ENCODE measurements at regions of chr2 and their contacts with region 1.

Region 1: GRCh38 chr2:25376750-25377621 is 35.3 kb upstream of the DNMT3A start:
- DNase-seq: peak; percentile 94
- ATAC-seq: peak; percentile 99
- H3K4me3 ChIP-seq: peak overlapping the region in 3 of 5 experiments; percentile 6 to 37 (median 29)
- H3K4me3 Mint-ChIP-seq: peak overlapping the region; percentile 78
- H3K27ac ChIP-seq: peak overlapping the region; percentile 80 to 87
- H3K27ac Mint-ChIP-seq: peak overlapping the region; percentile 92
- H3K4me1 ChIP-seq: peaks cover 31 to 41% of the 10 kb centered on the region in 2 donors
- H3K4me1 Mint-ChIP-seq: peaks cover 34% of the 10 kb centered on the region
- H3K27me3 ChIP-seq: no peaks in the 10 kb centered on the region
- H3K27me3 Mint-ChIP-seq: no peaks in the 10 kb centered on the region
- CTCF ChIP-seq: peak; percentile 97

Region 2: DNA sequence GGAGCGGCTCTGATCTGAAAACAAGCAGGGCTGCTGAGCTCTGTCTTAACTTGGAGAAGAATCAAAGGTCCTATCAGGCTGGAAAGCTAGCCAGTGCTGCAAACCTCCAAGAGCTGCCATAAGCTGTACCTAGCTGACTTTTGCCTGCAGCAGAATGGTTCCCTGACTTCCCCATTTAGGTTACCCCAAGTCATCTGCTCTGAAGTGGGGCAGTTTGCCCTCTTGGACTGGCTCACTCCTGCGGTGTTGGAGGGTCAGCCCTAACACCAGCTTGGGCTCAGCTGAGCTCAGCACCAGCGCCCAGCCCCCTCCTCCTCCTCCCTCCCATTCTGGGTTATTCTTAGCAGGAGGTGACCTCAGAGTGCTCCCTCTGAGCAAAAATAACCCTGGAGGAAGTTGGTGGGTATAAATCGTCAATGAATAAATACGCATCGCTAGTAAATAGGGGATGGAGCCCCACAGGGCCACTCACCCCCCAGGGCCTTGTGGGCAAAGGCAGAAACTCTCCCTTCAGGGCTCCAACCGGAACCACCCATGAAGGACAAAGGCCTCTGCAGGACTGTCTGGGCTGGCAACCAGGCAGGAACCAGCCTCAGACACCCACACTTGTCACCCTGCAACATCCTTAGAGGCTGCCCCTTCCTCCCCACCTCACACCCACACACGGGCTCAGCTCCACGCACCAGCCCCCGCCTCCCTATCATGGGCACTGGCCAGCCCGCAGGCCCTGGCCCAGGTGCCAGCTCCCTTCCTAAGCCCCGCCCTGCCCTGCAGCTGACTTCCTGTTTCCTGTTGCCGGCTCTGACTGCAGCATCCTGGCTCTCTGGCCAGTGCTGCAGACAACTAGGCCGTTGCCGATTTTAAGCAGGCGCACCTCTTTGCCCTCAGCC is 82.2 kb before region 1 on chr2:
- CTCF ChIA-PET with region 1: no interaction called
- POLR2A ChIA-PET with region 1: no interaction called
- intact Hi-C with region 1: loop called (anchors 1 kb)
- DNase-seq: peak; percentile 81
- ATAC-seq: peak; percentile 81
- H3K4me3 ChIP-seq: peak overlapping the region in 4 of 5 experiments; percentile 6 to 45 (median 26)
- H3K4me3 Mint-ChIP-seq: peak overlapping the region; percentile 80
- H3K27ac ChIP-seq: peak overlapping the region; percentile 87 to 91
- H3K27ac Mint-ChIP-seq: peak overlapping the region; percentile 94
- H3K4me1 ChIP-seq: peaks cover 41 to 61% of the 10 kb centered on the region in 2 donors
- H3K4me1 Mint-ChIP-seq: peaks cover 43% of the 10 kb centered on the region
- H3K27me3 ChIP-seq: no peaks in the 10 kb centered on the region
- H3K27me3 Mint-ChIP-seq: no peaks in the 10 kb centered on the region
- CTCF ChIP-seq: no peak

Region 3: DNA sequence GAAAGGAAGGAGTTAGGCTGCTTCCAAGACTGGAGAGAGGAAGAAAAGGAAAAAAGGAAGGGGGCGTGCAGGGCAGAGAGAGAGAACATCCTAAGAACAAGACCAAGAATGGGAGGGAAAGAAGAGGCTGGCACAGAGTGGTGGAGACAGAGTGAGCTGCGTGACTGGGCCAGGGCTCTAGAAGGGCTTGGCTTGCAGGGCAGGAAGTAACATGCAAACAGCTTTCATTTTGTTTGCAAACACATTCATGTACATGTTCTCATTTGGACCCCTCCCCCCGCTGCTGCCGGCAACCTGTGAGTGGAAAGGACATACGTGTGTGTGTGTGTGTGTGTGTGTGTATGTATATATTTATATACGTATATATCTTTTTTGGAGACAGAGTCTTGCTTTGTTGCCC is 11.5 kb after region 1 on chr2:
- CTCF ChIA-PET with region 1: interaction called, 30 read pairs
- POLR2A ChIA-PET with region 1: interaction called, 8 read pairs
- intact Hi-C with region 1: no loop called
- DNase-seq: no peak
- ATAC-seq: peak; percentile 75
- H3K4me3 ChIP-seq: peak overlapping the region in 2 of 5 experiments; percentile 16 to 39
- H3K4me3 Mint-ChIP-seq: peak overlapping the region; percentile 57
- H3K27ac ChIP-seq: peak overlapping the region in 1 of 2 donors; percentile 1
- H3K27ac Mint-ChIP-seq: peak overlapping the region; percentile 85
- H3K4me1 ChIP-seq: peaks cover 4 to 23% of the 10 kb centered on the region in 2 donors
- H3K4me1 Mint-ChIP-seq: peaks cover 29% of the 10 kb centered on the region
- H3K27me3 ChIP-seq: no peaks in the 10 kb centered on the region
- H3K27me3 Mint-ChIP-seq: no peaks in the 10 kb centered on the region
- CTCF ChIP-seq: no peak

Region 4: GRCh38 chr2:25411281-25411680 is 34.3 kb after region 1 on chr2:
- CTCF ChIA-PET with region 1: interaction called, 7 read pairs
- POLR2A ChIA-PET with region 1: interaction called, 7 read pairs
- intact Hi-C with region 1: loop called (anchors 2 kb)
- DNase-seq: peak; percentile 68
- ATAC-seq: peak; percentile 68
- H3K4me3 ChIP-seq: peak overlapping the region in 1 of 5 experiments; percentile 37
- H3K4me3 Mint-ChIP-seq: peak overlapping the region; percentile 62
- H3K27ac ChIP-seq: peak overlapping the region; percentile 58 to 68
- H3K27ac Mint-ChIP-seq: peak overlapping the region; percentile 86
- H3K4me1 ChIP-seq: peaks cover 46 to 61% of the 10 kb centered on the region in 2 donors
- H3K4me1 Mint-ChIP-seq: peaks cover 58% of the 10 kb centered on the region
- H3K27me3 ChIP-seq: no peaks in the 10 kb centered on the region
- H3K27me3 Mint-ChIP-seq: no peaks in the 10 kb centered on the region
- CTCF ChIP-seq: no peak

Region 5: DNA sequence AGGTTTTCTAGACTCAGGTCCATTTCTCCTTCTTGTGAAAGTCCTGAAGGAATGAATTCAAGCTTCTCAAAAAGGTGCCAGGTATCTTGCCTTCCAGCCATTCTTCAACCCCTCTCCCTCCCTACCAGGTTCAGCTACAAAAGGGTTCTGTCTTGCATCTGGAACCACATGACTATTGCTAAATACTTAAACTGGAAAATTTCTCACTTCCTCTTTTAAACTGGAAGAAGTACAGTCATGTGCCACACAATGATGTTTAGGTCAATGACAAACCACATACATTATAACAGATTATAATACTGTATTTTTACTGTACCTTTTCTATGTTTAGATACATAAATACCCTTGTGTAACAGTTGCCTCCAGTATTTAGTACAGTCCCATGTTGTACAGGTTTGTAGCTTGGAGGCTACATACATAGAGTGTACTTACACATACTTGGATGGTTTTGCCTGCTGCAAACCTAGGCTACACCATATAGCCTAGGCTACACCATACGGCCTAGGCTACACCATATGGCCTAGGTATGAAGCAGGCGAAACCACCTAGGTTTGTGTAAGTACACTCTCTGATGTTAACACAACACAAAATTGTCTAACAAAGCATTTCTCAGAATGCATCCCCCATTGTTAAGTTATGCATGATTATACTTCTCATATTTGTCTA is 106.7 kb after region 1 on chr2:
- CTCF ChIA-PET with region 1: interaction called, 7 read pairs
- POLR2A ChIA-PET with region 1: no interaction called
- intact Hi-C with region 1: loop called (anchors 1 kb)
- DNase-seq: peak; percentile 70
- ATAC-seq: peak; percentile 83
- H3K4me3 ChIP-seq: no peak overlapping the region
- H3K4me3 Mint-ChIP-seq: peak overlapping the region; percentile 37
- H3K27ac ChIP-seq: peak overlapping the region; percentile 28 to 37
- H3K27ac Mint-ChIP-seq: peak overlapping the region; percentile 80
- H3K4me1 ChIP-seq: peaks cover 20 to 24% of the 10 kb centered on the region in 2 donors
- H3K4me1 Mint-ChIP-seq: peaks cover 34% of the 10 kb centered on the region
- H3K27me3 ChIP-seq: no peaks in the 10 kb centered on the region
- H3K27me3 Mint-ChIP-seq: no peaks in the 10 kb centered on the region
- CTCF ChIP-seq: no peak

Region 6: DNA sequence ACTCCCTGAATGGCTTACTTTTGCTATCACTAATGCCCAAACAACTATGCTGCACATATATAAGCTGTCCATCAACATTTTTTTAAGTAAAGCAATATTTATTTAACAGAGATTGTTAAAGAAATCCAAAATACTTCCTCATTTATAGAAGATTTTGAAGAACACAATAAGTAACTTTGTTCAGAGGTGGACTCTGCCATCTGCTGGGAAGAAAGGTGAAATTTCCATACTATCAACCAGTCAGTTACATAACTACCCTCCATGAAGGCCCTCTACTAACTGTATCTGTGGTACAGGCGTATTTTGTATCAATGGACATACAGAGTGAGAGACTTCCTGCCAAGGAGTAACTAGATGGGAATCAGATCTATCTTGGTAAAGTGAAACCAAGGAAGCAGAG is 190.4 kb after region 1 on chr2:
- CTCF ChIA-PET with region 1: no interaction called
- POLR2A ChIA-PET with region 1: no interaction called
- intact Hi-C with region 1: loop called (anchors 1 kb)
- DNase-seq: peak; percentile 71
- ATAC-seq: peak; percentile 69
- H3K4me3 ChIP-seq: no peak overlapping the region
- H3K4me3 Mint-ChIP-seq: no peak overlapping the region
- H3K27ac ChIP-seq: peak overlapping the region in 1 of 2 donors; percentile 2
- H3K27ac Mint-ChIP-seq: no peak overlapping the region
- H3K4me1 ChIP-seq: peaks cover 17 to 19% of the 10 kb centered on the region in 2 donors
- H3K4me1 Mint-ChIP-seq: peaks cover 28% of the 10 kb centered on the region
- H3K27me3 ChIP-seq: no peaks in the 10 kb centered on the region
- H3K27me3 Mint-ChIP-seq: no peaks in the 10 kb centered on the region
- CTCF ChIP-seq: peak; percentile 77

Region 7: DNA sequence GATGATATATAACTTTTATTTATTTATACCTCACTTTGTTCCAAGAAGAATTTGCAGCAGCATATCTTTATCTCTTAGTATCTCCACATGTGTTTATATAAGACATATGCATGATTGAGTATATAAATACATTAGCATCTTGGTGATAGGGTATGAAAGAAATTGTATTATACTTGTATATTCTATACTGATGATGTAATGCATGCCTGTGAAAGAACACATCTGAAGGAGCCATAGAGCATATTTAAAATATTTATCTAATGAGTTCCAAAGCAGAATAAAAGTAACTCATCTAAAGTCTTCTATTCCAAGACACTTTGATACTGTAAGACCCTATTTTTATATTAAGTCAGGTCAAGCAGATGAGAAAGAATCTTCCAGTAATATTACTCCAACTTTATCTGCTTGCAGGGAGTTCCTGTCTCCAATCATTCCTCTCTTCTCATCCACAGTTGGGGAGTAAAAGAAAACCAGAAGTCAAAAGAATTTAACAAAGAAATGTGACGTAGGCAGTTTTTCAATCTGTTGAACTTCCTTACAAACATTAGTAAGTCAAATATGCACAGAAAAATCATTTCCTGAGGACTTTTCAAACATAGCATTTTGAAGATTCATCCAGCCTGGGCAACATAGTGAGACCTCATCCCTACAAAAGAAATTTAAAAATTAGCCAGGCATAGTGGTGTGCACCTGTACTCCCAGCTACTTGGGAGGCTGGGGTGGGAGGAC is 219.7 kb after region 1 on chr2:
- CTCF ChIA-PET with region 1: no interaction called
- POLR2A ChIA-PET with region 1: no interaction called
- intact Hi-C with region 1: no loop called
- DNase-seq: no peak
- ATAC-seq: no peak
- H3K4me3 ChIP-seq: no peak overlapping the region
- H3K4me3 Mint-ChIP-seq: no peak overlapping the region
- H3K27ac ChIP-seq: no peak overlapping the region
- H3K27ac Mint-ChIP-seq: no peak overlapping the region
- H3K4me1 ChIP-seq: peaks cover 0 to 8% of the 10 kb centered on the region in 2 donors
- H3K4me1 Mint-ChIP-seq: peaks cover 11% of the 10 kb centered on the region
- H3K27me3 ChIP-seq: no peaks in the 10 kb centered on the region
- H3K27me3 Mint-ChIP-seq: no peaks in the 10 kb centered on the region
- CTCF ChIP-seq: no peak

Measured in B cell (primary cell).